ENCODE measurements at regions of chr13 and their contacts with region 1.

Region 1: DNA sequence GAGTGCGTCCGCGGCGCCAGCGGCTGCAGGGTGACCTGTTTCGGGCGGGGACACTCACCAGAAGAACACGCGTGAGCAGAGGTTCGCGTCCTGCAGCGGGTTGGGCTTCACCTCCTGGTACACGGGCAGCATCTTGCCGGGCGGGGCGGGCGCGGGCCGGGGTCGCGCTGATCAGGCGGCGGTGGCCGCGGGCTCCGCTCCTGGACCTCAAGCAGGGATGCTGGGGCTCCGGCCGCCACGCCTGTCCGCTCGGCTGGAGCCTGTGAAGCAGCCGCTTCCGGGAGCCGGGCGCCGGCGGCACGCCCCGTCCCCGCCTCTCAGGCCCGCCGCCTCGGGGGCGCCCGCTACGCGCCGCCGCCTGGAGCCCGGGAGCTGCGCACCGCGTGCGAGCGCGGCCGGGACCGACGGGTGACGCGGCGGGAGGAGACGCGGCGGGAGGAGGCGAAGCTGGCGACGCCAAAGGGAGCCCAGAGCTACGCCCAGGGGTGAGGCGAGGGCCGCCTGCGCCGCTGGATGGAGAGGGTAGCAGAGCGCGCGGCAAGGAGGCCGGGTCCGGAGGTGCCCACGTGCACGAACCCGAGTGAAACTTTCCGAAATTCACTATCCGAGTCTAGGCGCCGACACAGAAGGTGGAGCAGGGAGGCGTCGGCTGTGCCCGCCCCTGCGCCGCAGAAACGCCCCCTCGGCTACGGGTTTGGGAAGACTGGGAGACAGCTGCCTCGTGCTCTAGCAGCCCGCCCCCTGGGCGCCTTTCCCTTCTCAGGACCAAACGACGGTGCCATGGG is at the start of gene ABCC4:
- DNase-seq: peak; percentile 67
- H3K4me3 Mint-ChIP-seq: peak within 1 kb of the TSS; percentile 75
- H3K27ac Mint-ChIP-seq: peak within 1 kb of the TSS; percentile 5
- H3K4me1 Mint-ChIP-seq: peaks cover 32% of the 10 kb centered on the region
- H3K27me3 Mint-ChIP-seq: no peaks in the 10 kb centered on the region
- total RNA-seq, gene ABCC4: 6.9 to 8.7 TPM

Region 2: GRCh38 chr13:94595950-94596574 is 705.3 kb before region 1 on chr13 and contains the start of gene TGDS:
- CTCF ChIA-PET with region 1: no interaction called
- POLR2A ChIA-PET with region 1: no interaction called
- intact Hi-C with region 1: loop called (anchors 5 kb)
- DNase-seq: peak; percentile 94
- H3K4me3 Mint-ChIP-seq: peak within 1 kb of the TSS; percentile 93
- H3K27ac Mint-ChIP-seq: peak within 1 kb of the TSS; percentile 93
- H3K4me1 Mint-ChIP-seq: peaks cover 36% of the 10 kb centered on the region
- H3K27me3 Mint-ChIP-seq: no peaks in the 10 kb centered on the region
- total RNA-seq, gene TGDS: 19.0 to 19.6 TPM

Measured in activated CD4-positive, alpha-beta memory T cell treated with anti-CD3 and anti-CD28 coated beads for 36 hours (primary cell).